CD4-positive, alpha-beta memory T cell (primary cell): ENCODE measurements at regions of chr3 and their contacts with region 1.

Region 1: DNA sequence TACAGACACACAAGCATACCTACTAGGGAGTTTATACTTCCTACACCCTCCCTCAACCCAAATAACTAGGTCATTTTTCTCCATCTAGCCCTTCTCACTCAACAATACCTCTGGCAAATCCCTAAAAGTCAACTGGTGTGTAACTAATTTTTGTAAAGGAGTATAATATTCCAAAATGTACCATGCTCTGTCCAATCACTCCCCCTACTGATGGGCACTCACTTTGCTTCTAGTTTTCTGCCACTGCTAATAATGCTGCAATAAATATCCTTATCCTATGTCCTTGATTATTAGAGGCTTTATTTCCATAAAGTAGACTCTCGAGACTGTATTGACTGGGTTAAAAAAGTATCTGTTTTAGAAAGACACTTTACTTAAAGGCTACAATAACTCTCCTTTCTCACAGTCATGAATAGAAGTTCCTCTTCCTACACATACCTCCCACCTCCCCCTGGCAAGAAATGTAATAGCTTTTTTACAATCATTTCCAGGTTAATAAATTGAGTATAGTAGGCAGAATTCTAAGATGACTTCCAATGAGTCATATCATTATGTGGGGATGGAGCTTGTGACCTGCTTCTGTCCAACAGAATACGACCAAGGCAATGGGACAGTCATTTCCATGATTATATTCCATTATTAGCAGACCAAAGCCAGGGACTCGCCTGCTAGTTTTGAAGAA is 30.0 kb downstream of the SHQ1 start:
- DNase-seq: peak in 1 of 5 donors; percentile 5
- H3K4me3 ChIP-seq: no peak overlapping the region
- H3K4me3 Mint-ChIP-seq: no peak overlapping the region
- H3K27ac ChIP-seq: no peak overlapping the region
- H3K27ac Mint-ChIP-seq: peak overlapping the region in 1 of 7 donors; percentile 59
- H3K4me1 ChIP-seq: peaks cover 14% of the 10 kb centered on the region
- H3K4me1 Mint-ChIP-seq: peaks cover 0 to 4% (median 0%) of the 10 kb centered on the region in 4 donors
- H3K27me3 ChIP-seq: no peaks in the 10 kb centered on the region
- H3K27me3 Mint-ChIP-seq: no peaks in the 10 kb centered on the region

Region 2: GRCh38 chr3:71710906-71711494 is 1107.2 kb before region 1 on chr3:
- CTCF ChIA-PET with region 1: interaction called, 10 read pairs
- POLR2A ChIA-PET with region 1: no interaction called
- intact Hi-C with region 1: loop called (anchors 2 kb)
- DNase-seq: peak in 4 of 5 donors; percentile 50 to 59 (median 56)
- H3K4me3 ChIP-seq: no peak overlapping the region
- H3K4me3 Mint-ChIP-seq: peak overlapping the region in 3 of 8 donors; percentile 25 to 47 (median 25)
- H3K27ac ChIP-seq: no peak overlapping the region
- H3K27ac Mint-ChIP-seq: peak overlapping the region in 3 of 7 donors; percentile 80 to 83 (median 81)
- H3K4me1 ChIP-seq: peaks cover 87% of the 10 kb centered on the region
- H3K4me1 Mint-ChIP-seq: peaks cover 66 to 92% (median 74%) of the 10 kb centered on the region in 4 donors
- H3K27me3 ChIP-seq: no peaks in the 10 kb centered on the region
- H3K27me3 Mint-ChIP-seq: no peaks in the 10 kb centered on the region

Region 3: GRCh38 chr3:71926262-71926600 is 892.0 kb before region 1 on chr3:
- CTCF ChIA-PET with region 1: interaction called, 6 read pairs
- POLR2A ChIA-PET with region 1: no interaction called
- intact Hi-C with region 1: loop called (anchors 1 kb)
- DNase-seq: peak in 2 of 5 donors; percentile 4
- H3K4me3 ChIP-seq: no peak overlapping the region
- H3K4me3 Mint-ChIP-seq: no peak overlapping the region
- H3K27ac ChIP-seq: no peak overlapping the region
- H3K27ac Mint-ChIP-seq: no peak overlapping the region
- H3K4me1 ChIP-seq: no peaks in the 10 kb centered on the region
- H3K4me1 Mint-ChIP-seq: no peaks in the 10 kb centered on the region
- H3K27me3 ChIP-seq: no peaks in the 10 kb centered on the region
- H3K27me3 Mint-ChIP-seq: peaks cover 2 to 17% of the 10 kb centered on the region in 2 donors

Region 4: GRCh38 chr3:72738752-72739530 is 79.3 kb before region 1 on chr3:
- CTCF ChIA-PET with region 1: interaction called, 23 read pairs
- POLR2A ChIA-PET with region 1: interaction called, 4 read pairs
- intact Hi-C with region 1: loop called (anchors 5 kb)
- DNase-seq: peak; percentile 68 to 78 (median 75)
- H3K4me3 ChIP-seq: peak overlapping the region; percentile 63 to 78
- H3K4me3 Mint-ChIP-seq: peak overlapping the region; percentile 87 to 94 (median 90)
- H3K27ac ChIP-seq: peak overlapping the region; percentile 27
- H3K27ac Mint-ChIP-seq: peak overlapping the region; percentile 30 to 93 (median 87)
- H3K4me1 ChIP-seq: peaks cover 19% of the 10 kb centered on the region
- H3K4me1 Mint-ChIP-seq: peaks cover 9 to 29% (median 17%) of the 10 kb centered on the region in 4 donors
- H3K27me3 ChIP-seq: no peaks in the 10 kb centered on the region
- H3K27me3 Mint-ChIP-seq: no peaks in the 10 kb centered on the region

Region 5: DNA sequence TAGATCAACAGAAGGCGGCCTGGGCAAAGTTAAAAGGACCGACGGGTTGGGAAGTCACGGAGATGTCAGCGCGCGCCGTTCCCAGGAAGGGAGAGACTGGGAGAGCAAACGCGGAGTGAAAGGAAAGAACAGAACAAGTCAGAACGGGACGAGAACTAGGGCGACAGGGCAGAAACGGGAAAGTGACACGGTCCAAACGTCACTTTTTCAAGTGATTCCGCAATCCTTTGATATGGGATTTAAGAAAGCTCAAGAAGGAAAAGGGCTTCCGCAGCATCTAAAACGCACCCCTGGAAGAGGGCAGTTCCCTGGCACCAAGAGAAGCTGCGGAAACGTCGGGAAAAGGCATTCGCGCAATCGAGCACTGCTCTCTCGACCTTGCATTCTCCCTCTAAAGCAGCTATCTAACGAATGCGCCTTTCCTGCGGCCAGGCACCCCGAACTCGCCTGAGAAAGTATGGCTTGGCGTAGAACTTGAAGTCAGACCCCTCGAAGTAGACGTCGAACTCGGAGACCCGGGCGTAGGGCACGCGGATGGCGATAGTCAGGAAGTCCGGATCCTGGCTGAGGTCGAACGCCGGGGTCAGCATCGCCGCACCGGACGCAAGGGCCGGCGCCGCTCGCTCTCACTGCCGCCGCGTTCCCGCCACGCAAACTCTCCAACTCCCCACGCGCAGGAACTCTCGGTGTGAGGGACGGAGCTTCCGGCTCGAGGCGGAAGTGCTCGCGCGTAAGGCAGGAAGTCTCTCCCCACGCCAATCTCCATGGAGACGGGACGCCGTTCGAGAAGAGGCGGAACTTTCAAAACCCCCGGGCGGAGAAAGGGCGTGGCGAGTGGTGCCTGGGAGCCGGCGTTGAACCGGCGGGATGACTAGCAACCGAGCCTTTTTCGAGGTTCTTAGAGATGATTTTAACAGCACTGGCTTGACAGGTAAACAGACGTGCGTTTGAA is 29.8 kb after region 1 on chr3 and contains the start of gene SHQ1:
- CTCF ChIA-PET with region 1: interaction called, 15 read pairs
- POLR2A ChIA-PET with region 1: no interaction called
- intact Hi-C with region 1: no loop called
- DNase-seq: peak; percentile 91 to 96 (median 92)
- H3K4me3 ChIP-seq: peak within 1 kb of the TSS; percentile 82 to 97
- H3K4me3 Mint-ChIP-seq: peak within 1 kb of the TSS; percentile 94 to 97 (median 96)
- H3K27ac ChIP-seq: peak within 1 kb of the TSS; percentile 61
- H3K27ac Mint-ChIP-seq: peak within 1 kb of the TSS; percentile 78 to 95 (median 93)
- H3K4me1 ChIP-seq: peaks cover 47% of the 10 kb centered on the region
- H3K4me1 Mint-ChIP-seq: peaks cover 38 to 60% (median 48%) of the 10 kb centered on the region in 4 donors
- H3K27me3 ChIP-seq: no peaks in the 10 kb centered on the region
- H3K27me3 Mint-ChIP-seq: peaks cover 0 to 2% of the 10 kb centered on the region in 2 donors
- total RNA-seq, gene SHQ1: 28.7 to 31.2 TPM

Region 6: DNA sequence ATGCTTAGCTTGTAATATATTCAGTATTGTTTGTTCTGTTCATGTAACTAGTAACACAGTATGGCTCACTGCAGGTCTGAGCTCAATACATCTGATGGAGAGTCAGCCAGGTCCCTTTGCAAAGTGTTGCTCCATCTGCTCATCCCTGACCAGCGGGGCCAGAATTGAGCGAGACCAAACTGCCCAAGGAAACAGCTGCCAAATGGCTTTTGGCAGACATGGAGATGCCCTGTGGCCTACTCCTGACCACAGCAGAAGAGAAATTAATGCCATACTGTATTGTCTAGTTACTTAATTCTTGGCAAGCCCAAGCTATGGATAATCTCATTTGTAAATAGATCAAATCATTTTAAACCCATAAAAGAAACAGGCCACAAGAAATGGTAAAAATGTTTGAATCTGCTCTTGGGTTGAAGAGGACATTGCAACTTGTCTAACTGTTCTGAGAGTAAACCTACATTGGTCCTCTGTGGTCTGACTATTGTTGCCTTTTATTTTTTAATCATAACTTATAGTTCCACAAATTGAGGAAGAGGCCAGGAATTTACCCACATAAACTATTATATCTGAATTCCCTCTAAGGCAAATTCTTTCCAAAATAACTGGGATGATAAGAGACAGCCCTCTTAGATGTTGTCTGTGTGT is 452.7 kb after region 1 on chr3:
- CTCF ChIA-PET with region 1: no interaction called
- POLR2A ChIA-PET with region 1: no interaction called
- intact Hi-C with region 1: no loop called
- DNase-seq: no peak
- H3K4me3 ChIP-seq: no peak overlapping the region
- H3K4me3 Mint-ChIP-seq: no peak overlapping the region
- H3K27ac ChIP-seq: no peak overlapping the region
- H3K27ac Mint-ChIP-seq: no peak overlapping the region
- H3K4me1 ChIP-seq: no peaks in the 10 kb centered on the region
- H3K4me1 Mint-ChIP-seq: no peaks in the 10 kb centered on the region
- H3K27me3 ChIP-seq: no peaks in the 10 kb centered on the region
- H3K27me3 Mint-ChIP-seq: no peaks in the 10 kb centered on the region